Activated naive CD8-positive, alpha-beta T cell treated with anti-CD3 and anti-CD28 coated beads, Interleukin-2, amount 10 ng/mL, durations not matched to agents 7 days and 5 days (primary cell): ENCODE measurements at regions of chr11 and their contacts with region 1.

Region 1: DNA sequence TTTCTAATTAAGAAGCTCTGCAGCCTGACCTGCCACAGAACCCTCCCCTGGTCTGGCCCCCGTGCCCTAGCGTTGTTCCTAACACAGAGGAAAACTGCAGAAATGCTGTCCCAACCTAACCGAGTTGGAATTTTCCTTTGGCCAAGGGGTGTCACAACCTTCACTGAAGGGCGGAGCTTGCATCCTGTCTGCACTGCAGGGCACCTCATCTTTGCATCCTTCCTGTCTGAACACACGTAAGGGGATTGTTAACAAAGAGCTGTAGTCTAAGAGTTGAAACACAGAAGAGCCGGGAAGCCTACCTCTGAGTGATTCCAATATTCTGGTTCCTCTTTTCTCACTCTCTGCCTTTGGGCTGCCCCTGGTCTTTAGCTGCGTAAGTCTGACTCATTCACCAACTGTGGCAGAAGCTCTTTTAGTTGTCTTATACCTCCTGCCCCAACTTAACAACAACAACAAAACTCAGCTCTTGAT is 1.6 kb downstream of the DIXDC1 start:
- DNase-seq: no peak
- ATAC-seq: peak; percentile 63
- H3K4me3 Mint-ChIP-seq: peak overlapping the region; percentile 65
- H3K27ac Mint-ChIP-seq: peak overlapping the region; percentile 64
- H3K4me1 Mint-ChIP-seq: peaks cover 18% of the 10 kb centered on the region
- H3K27me3 Mint-ChIP-seq: no peaks in the 10 kb centered on the region

Region 2: DNA sequence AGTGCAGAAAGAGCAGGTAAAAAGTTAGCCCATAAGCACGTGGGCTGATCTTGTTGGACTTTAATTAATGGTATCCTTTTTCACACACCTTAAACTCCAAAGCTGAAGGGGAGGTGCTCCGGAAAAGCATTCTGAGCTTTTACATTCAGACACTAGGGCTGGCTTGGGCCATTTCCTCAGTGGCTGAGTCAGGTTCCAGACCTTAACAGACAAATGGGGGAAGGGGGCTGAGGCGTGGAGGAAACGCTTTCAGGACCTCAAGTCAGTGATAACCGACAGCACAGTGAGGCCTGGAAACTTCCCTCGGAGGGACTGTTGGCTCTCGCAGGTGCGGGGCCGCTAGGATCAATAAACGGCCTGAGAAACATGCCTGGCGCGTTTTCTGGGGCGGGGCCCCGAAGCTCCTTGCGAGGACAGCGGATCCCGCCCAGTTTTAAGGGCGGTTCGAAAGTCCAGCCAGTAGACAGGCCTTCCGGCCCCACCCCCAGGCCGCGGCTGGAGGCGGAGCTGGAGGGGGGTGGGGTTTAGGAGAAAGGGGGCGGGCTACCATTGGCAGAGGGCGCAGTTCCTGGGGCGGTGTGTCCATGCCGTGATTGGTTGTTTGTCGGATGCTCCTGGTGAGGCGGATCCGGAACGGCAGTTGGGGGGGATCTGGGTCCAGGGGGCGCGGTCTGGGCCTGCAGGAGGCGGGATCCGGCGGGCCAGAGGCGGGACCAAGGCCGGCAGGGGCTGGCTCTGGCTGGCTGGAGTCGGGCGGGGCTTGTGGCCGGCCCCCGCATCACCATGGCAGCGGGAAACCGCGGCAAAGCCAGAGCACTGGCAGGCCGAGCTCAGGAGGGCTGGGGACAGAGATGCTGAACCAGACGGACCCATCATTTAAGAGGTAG is 12.0 kb before region 1 on chr11:
- POLR2A ChIA-PET with region 1: interaction called, 12 read pairs
- DNase-seq: peak; percentile 98
- ATAC-seq: peak; percentile 90
- H3K4me3 Mint-ChIP-seq: peak overlapping the region; percentile 86
- H3K27ac Mint-ChIP-seq: peak overlapping the region; percentile 90
- H3K4me1 Mint-ChIP-seq: peaks cover 5% of the 10 kb centered on the region
- H3K27me3 Mint-ChIP-seq: peaks cover 11% of the 10 kb centered on the region

Region 3: DNA sequence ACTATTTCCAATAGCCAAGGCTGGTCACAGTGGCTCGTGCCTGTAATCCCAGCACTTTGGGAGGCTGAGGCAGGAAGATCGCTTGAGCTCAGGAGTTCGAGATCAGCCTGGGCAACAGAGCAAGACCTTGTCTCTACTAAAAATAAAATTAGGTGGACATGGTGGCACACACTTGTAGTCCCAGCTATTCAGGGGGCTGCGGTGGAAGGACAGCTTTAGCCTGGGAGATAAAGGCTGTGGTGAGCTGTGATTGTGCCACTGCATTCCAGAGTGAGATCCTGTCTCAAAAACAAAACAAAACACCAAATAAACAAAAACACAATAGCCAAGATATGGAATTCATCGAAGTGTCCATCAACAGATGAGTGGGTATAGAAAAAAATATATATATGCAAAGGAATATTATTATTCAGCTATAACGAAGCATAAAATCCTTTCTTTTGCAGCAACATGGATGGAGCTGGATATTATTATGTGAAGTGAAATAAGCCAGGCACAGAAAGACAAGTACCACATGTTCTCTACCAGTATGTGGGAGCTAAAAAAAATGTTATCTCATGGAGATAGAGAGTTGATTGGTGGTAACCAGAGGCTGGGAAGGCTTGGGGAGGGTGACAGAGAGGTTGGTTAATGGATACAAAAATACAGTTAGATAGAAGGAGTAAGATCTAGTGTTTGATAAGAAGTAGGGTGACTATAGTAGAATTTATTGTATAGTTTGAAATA is 63.9 kb after region 1 on chr11:
- POLR2A ChIA-PET with region 1: no interaction called
- DNase-seq: no peak
- ATAC-seq: no peak
- H3K4me3 Mint-ChIP-seq: no peak overlapping the region
- H3K27ac Mint-ChIP-seq: no peak overlapping the region
- H3K4me1 Mint-ChIP-seq: peaks cover 2% of the 10 kb centered on the region
- H3K27me3 Mint-ChIP-seq: peaks cover 6% of the 10 kb centered on the region